CD8-positive, alpha-beta T cell (primary cell): ENCODE measurements at regions of chr13 and their contacts with region 1.

Region 1: DNA sequence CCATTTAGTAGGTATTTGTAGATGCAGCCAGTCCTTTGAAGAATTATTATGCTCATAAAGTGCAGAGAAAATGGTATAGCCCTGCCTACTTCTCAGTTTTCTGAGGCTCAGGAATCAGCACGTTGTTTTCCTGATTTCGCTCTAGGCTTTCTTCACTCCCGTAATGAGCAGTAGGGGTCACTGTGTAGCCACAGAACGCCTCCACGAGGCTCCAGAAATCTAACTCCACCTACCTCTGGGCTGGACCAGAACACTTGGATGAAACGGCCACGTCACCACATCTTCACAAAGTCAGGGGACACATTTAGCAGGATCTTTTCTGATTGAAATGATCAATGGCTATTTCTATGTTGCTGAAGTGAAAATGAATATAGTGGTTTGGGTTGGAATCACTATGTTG is 49.8 kb upstream of the GTF3A start:
- DNase-seq: peak; percentile 14 to 75 (median 51)
- ATAC-seq: peak; percentile 85
- H3K4me3 ChIP-seq: no peak overlapping the region
- H3K4me3 Mint-ChIP-seq: no peak overlapping the region
- H3K27ac ChIP-seq: no peak overlapping the region
- H3K27ac Mint-ChIP-seq: no peak overlapping the region
- H3K4me1 ChIP-seq: no peaks in the 10 kb centered on the region
- H3K4me1 Mint-ChIP-seq: peaks cover 5% of the 10 kb centered on the region
- H3K27me3 ChIP-seq: no peaks in the 10 kb centered on the region
- H3K27me3 Mint-ChIP-seq: peaks cover 28% of the 10 kb centered on the region
- CTCF ChIP-seq: peak; percentile 67

Region 2: DNA sequence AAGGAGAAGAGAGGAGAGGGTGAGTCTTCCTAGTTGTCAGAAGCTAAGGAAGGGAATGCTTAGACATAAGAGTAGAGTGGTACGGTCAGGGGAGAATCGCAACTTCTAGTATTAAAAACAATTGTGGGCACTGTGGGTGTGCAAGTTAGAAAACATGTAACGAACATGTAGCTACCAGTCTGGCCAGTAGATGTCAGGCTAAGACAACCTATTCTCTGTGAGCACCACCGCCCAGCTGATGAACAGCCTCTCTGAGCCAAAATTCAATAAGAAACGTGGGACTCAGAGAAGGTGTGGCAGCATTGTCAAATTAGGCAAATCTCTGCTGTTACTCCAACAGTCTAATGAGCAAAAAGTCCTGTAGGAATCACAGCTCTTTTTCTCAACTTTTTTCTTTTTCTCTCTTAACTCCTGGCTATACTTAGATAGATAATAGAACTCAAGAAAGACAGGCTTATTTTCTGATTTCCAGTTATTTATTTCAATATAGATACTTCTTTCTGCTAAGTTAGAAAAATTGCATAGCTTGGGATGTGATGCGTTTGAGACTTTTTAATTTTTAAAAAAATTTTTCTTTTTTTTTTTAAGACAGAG is 389.3 kb before region 1 on chr13:
- CTCF ChIA-PET with region 1: interaction called, 29 read pairs
- POLR2A ChIA-PET with region 1: no interaction called
- intact Hi-C with region 1: no loop called
- DNase-seq: peak; percentile 43 to 85 (median 69)
- ATAC-seq: peak; percentile 96
- H3K4me3 ChIP-seq: no peak overlapping the region
- H3K4me3 Mint-ChIP-seq: no peak overlapping the region
- H3K27ac ChIP-seq: no peak overlapping the region
- H3K27ac Mint-ChIP-seq: no peak overlapping the region
- H3K4me1 ChIP-seq: no peaks in the 10 kb centered on the region
- H3K4me1 Mint-ChIP-seq: peaks cover 3% of the 10 kb centered on the region
- H3K27me3 ChIP-seq: no peaks in the 10 kb centered on the region
- H3K27me3 Mint-ChIP-seq: peaks cover 16% of the 10 kb centered on the region
- CTCF ChIP-seq: peak; percentile 87

Region 3: DNA sequence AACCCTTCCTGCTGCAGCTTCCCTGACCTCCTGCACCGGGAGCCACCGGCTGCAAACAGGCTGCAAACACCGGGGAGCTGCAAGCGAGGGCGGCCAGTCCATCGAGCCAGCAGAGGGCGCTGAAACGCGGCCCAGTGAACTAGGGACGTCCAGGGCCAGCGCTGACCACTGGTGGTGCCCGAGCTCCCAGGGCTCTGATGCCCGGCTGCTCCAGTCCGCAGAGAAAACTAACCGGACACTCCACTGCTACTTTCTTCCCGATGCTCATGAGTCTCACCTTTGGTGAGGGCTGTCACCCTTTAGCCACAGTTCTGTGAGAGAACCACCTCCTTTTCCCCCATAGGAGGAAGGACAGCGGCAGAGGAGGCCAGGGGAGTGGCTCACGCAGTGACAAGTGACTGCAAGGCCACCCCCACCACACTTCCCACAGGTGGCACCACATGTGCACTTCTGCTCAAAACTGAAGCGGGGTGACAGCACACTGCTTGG is 158.5 kb after region 1 on chr13:
- CTCF ChIA-PET with region 1: interaction called, 3 read pairs
- POLR2A ChIA-PET with region 1: no interaction called
- intact Hi-C with region 1: loop called (anchors 2 to 5 kb)
- DNase-seq: peak; percentile 12 to 67 (median 52)
- ATAC-seq: peak; percentile 78
- H3K4me3 ChIP-seq: peak overlapping the region in 1 of 2 experiments; percentile 28
- H3K4me3 Mint-ChIP-seq: no peak overlapping the region
- H3K27ac ChIP-seq: no peak overlapping the region
- H3K27ac Mint-ChIP-seq: no peak overlapping the region
- H3K4me1 ChIP-seq: peaks cover 10% of the 10 kb centered on the region
- H3K4me1 Mint-ChIP-seq: peaks cover 7% of the 10 kb centered on the region
- H3K27me3 ChIP-seq: no peaks in the 10 kb centered on the region
- H3K27me3 Mint-ChIP-seq: peaks cover 3% of the 10 kb centered on the region
- CTCF ChIP-seq: peak; percentile 74

Region 4: GRCh38 chr13:27770809-27771208 is 396.2 kb after region 1 on chr13:
- CTCF ChIA-PET with region 1: no interaction called
- POLR2A ChIA-PET with region 1: no interaction called
- intact Hi-C with region 1: loop called in 1 of 2 experiments (anchors 1 kb)
- DNase-seq: peak in 3 of 9 experiments; percentile 20 to 47 (median 28)
- ATAC-seq: no peak
- H3K4me3 ChIP-seq: no peak overlapping the region
- H3K4me3 Mint-ChIP-seq: no peak overlapping the region
- H3K27ac ChIP-seq: no peak overlapping the region
- H3K27ac Mint-ChIP-seq: no peak overlapping the region
- H3K4me1 ChIP-seq: no peaks in the 10 kb centered on the region
- H3K4me1 Mint-ChIP-seq: no peaks in the 10 kb centered on the region
- H3K27me3 ChIP-seq: peaks cover 0 to 5% of the 10 kb centered on the region in 2 experiments
- H3K27me3 Mint-ChIP-seq: peaks cover 49% of the 10 kb centered on the region
- CTCF ChIP-seq: no peak

Region 5: GRCh38 chr13:27953676-27954405 is 579.2 kb after region 1 on chr13:
- CTCF ChIA-PET with region 1: interaction called, 6 read pairs
- POLR2A ChIA-PET with region 1: no interaction called
- intact Hi-C with region 1: loop called in 1 of 2 experiments (anchors 2 kb)
- DNase-seq: peak; percentile 23 to 73 (median 54)
- ATAC-seq: peak; percentile 81
- H3K4me3 ChIP-seq: peak overlapping the region; percentile 28 to 53
- H3K4me3 Mint-ChIP-seq: peak overlapping the region; percentile 71
- H3K27ac ChIP-seq: no peak overlapping the region
- H3K27ac Mint-ChIP-seq: no peak overlapping the region
- H3K4me1 ChIP-seq: peaks cover 7% of the 10 kb centered on the region
- H3K4me1 Mint-ChIP-seq: peaks cover 17% of the 10 kb centered on the region
- H3K27me3 ChIP-seq: peaks cover 18 to 22% of the 10 kb centered on the region in 2 experiments
- H3K27me3 Mint-ChIP-seq: peaks cover 68% of the 10 kb centered on the region
- CTCF ChIP-seq: peak; percentile 70

Region 6: DNA sequence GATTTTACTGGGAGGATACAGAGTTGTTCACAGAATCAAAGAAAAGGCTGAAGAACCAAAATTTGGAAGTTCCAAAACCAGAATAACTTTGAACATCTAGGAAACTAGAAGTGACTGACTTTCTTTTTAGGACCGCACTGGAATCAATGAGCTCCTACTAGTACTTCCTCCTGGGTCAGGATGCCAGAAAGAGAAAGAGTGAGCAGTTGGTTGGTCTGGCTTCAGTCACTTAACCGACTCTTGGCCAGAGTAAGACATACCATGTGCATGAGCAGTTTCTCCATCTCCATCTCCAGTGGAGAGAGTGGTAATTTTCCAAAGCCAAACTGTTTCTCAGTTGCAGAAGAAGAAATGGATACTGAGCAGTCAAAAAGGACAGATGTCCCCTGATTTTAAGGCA is 1418.3 kb after region 1 on chr13:
- CTCF ChIA-PET with region 1: no interaction called
- POLR2A ChIA-PET with region 1: no interaction called
- intact Hi-C with region 1: loop called in 1 of 2 experiments (anchors 5 kb)
- DNase-seq: no peak
- ATAC-seq: no peak
- H3K4me3 ChIP-seq: no peak overlapping the region
- H3K4me3 Mint-ChIP-seq: no peak overlapping the region
- H3K27ac ChIP-seq: no peak overlapping the region
- H3K27ac Mint-ChIP-seq: no peak overlapping the region
- H3K4me1 ChIP-seq: no peaks in the 10 kb centered on the region
- H3K4me1 Mint-ChIP-seq: no peaks in the 10 kb centered on the region
- H3K27me3 ChIP-seq: peaks cover 0 to 3% of the 10 kb centered on the region in 2 experiments
- H3K27me3 Mint-ChIP-seq: peaks cover 36% of the 10 kb centered on the region
- CTCF ChIP-seq: no peak